ENCODE measurements at regions of chr7 and their contacts with region 1.

Region 1: GRCh38 chr7:107879400-107880035 is 11.5 kb upstream of the DLD start:
- DNase-seq: peak; percentile 57
- H3K4me3 Mint-ChIP-seq: no peak overlapping the region
- H3K27ac Mint-ChIP-seq: no peak overlapping the region
- H3K4me1 Mint-ChIP-seq: peaks cover 13% of the 10 kb centered on the region
- H3K27me3 Mint-ChIP-seq: peaks cover 4% of the 10 kb centered on the region

Region 2: DNA sequence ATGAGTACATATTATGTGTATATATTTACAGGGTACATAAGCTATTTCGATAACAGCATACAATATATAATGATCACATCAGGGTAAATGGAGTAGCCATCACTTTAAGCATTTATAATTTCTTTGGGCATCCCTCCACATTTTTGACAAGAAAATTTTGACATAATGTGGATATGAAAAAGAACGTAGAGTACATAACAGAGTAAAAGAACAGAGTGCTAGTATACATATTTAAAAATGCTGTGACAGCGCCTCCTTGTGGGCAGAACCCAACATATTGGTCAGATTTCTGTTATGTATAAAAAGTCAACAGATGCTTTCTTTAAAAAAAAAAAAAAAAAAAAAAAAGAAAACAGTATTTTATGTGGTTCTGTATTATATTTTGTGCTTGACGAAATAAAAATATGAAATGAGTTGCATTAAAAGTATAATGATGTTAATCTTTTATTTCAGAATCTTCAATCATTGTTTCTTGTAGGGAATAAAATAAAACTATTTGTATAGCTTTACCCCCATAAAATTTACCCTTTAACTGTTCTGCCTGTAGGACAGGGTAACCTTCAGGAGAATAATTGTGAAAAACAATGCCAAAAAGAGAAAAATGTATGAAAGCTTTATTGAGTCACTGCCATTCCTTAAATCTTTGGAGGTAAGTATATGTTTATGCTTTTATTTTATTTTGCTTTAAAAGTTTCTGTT is 729.0 kb before region 1 on chr7:
- CTCF ChIA-PET with region 1: interaction called, 3 read pairs
- intact Hi-C with region 1: loop called (anchors 1 kb)
- DNase-seq: peak; percentile 91
- H3K4me3 Mint-ChIP-seq: no peak overlapping the region
- H3K27ac Mint-ChIP-seq: no peak overlapping the region
- H3K4me1 Mint-ChIP-seq: peaks cover 4% of the 10 kb centered on the region
- H3K27me3 Mint-ChIP-seq: no peaks in the 10 kb centered on the region

Region 3: GRCh38 chr7:107528466-107528865 is 351.1 kb before region 1 on chr7:
- CTCF ChIA-PET with region 1: no interaction called
- intact Hi-C with region 1: no loop called
- DNase-seq: no peak
- H3K4me3 Mint-ChIP-seq: no peak overlapping the region
- H3K27ac Mint-ChIP-seq: no peak overlapping the region
- H3K4me1 Mint-ChIP-seq: peaks cover 19% of the 10 kb centered on the region
- H3K27me3 Mint-ChIP-seq: no peaks in the 10 kb centered on the region

Region 4: DNA sequence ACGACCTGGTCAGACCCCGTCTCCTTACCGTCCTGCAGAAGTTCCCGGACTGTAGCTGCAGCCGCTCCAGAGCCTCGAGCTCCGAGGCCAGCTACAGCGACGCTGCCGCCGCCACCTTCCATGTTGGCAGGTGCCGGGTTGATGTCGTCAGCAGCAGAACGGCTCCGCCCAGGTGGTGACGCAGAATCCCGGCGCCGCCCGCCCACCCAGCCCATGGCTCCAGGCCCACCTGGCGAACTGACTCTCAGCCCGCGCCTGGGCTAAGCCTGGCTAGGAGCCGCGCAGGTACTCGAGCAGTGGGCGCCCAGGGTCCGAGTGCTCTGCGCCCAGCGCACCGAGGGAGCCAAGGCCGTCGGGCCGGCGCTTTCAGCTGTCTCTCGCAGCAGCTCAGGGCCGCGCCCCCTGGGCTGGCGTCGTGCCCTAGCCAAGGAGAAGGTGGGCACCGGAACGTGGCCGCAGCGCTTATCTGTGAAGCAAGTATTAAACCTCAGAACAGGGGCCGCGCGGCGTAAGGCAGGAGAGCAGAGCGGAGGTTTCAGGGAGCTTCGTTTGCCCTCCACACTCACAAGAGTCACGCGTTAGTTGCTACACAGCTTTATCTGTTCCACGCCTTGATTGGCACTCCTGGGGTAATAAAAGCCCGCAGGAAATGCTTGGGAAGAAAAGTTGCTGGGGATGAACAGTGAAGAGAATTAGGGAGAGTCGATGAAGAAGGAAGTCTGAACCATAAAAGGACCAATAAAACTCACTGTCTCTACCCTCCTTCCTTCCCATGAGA is 315.6 kb before region 1 on chr7 and contains the starts of genes COG5 and DUS4L:
- CTCF ChIA-PET with region 1: no interaction called
- intact Hi-C with region 1: loop called (anchors 2 kb)
- DNase-seq: peak; percentile 87
- H3K4me3 Mint-ChIP-seq: peak within 1 kb of the TSS; percentile 82
- H3K27ac Mint-ChIP-seq: peak within 1 kb of the TSS; percentile 92
- H3K4me1 Mint-ChIP-seq: peaks cover 61% of the 10 kb centered on the region
- H3K27me3 Mint-ChIP-seq: no peaks in the 10 kb centered on the region
- total RNA-seq, gene COG5: 52.0 to 62.8 TPM
- total RNA-seq, gene DUS4L: 10.8 to 12.3 TPM

Region 5: DNA sequence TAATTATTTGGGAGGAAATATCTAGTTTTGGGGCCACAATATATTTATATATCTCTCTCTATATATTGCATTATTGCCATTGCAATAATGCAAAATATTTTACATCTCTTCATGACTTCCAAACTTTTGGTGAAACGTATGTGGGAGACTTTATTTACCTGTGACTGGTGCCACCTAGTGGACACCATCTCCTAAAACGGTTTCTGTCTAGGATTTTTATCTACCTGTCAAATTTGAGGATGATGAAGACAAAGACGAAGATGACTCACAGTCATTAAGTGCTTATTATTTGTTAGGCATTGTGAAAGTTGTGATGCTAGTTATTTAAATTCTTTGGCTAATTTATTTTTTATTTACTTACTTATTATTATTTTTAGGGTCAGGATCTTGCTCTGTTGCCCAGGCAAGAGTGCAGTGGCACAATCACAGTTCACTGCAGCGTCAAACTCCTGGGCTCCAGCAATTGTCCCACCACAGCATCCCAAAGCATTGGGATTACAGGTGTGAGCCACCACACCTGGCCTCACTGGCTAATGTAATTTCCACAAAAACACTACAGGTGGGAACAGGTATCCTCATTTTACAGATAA is 154.3 kb before region 1 on chr7:
- CTCF ChIA-PET with region 1: interaction called, 8 read pairs
- intact Hi-C with region 1: loop called (anchors 1 kb)
- DNase-seq: peak; percentile 75
- H3K4me3 Mint-ChIP-seq: no peak overlapping the region
- H3K27ac Mint-ChIP-seq: no peak overlapping the region
- H3K4me1 Mint-ChIP-seq: no peaks in the 10 kb centered on the region
- H3K27me3 Mint-ChIP-seq: peaks cover 26% of the 10 kb centered on the region

Region 6: GRCh38 chr7:107856806-107857540 is 22.5 kb before region 1 on chr7:
- CTCF ChIA-PET with region 1: interaction called, 11 read pairs
- intact Hi-C with region 1: no loop called
- DNase-seq: peak; percentile 28
- H3K4me3 Mint-ChIP-seq: no peak overlapping the region
- H3K27ac Mint-ChIP-seq: no peak overlapping the region
- H3K4me1 Mint-ChIP-seq: peaks cover 16% of the 10 kb centered on the region
- H3K27me3 Mint-ChIP-seq: no peaks in the 10 kb centered on the region

Region 7: GRCh38 chr7:108146070-108146837 is 266.7 kb after region 1 on chr7:
- CTCF ChIA-PET with region 1: interaction called, 7 read pairs
- intact Hi-C with region 1: loop called (anchors 1 kb)
- DNase-seq: peak; percentile 64
- H3K4me3 Mint-ChIP-seq: no peak overlapping the region
- H3K27ac Mint-ChIP-seq: no peak overlapping the region
- H3K4me1 Mint-ChIP-seq: no peaks in the 10 kb centered on the region
- H3K27me3 Mint-ChIP-seq: no peaks in the 10 kb centered on the region

Region 8: GRCh38 chr7:108629651-108630400 is 750.3 kb after region 1 on chr7:
- CTCF ChIA-PET with region 1: no interaction called
- intact Hi-C with region 1: no loop called
- DNase-seq: no peak
- H3K4me3 Mint-ChIP-seq: no peak overlapping the region
- H3K27ac Mint-ChIP-seq: no peak overlapping the region
- H3K4me1 Mint-ChIP-seq: no peaks in the 10 kb centered on the region
- H3K27me3 Mint-ChIP-seq: peaks cover 14% of the 10 kb centered on the region

Measured in activated naive CD4-positive, alpha-beta T cell treated with anti-CD3 and anti-CD28 coated beads for 36 hours (primary cell).